Aorta (tissue), 5 donors: ENCODE measurements at regions of chrX and their contacts with region 1.

Region 1: GRCh38 chrX:115560978-115561604 is at the start of gene PLS3:
- DNase-seq: peak; percentile 91 to 94
- ATAC-seq: peak; percentile 91
- H3K4me3 ChIP-seq: peak within 1 kb of the TSS; percentile 48 to 49
- H3K27ac ChIP-seq: peak within 1 kb of the TSS; percentile 64 to 86
- H3K4me1 ChIP-seq: no peaks in the 10 kb centered on the region
- H3K27me3 ChIP-seq: no peaks in the 10 kb centered on the region
- total RNA-seq, gene PLS3: 481 to 708 TPM

Region 2: GRCh38 chrX:115357326-115358120 is 203.6 kb before region 1 on chrX:
- intact Hi-C with region 1: loop called in 1 of 2 experiments (anchors 5 kb)
- DNase-seq: no peak
- ATAC-seq: peak; percentile 52
- H3K4me3 ChIP-seq: no peak overlapping the region
- H3K27ac ChIP-seq: peak overlapping the region; percentile 74 to 87
- H3K4me1 ChIP-seq: peaks cover 4 to 5% of the 10 kb centered on the region in 2 donors
- H3K27me3 ChIP-seq: no peaks in the 10 kb centered on the region

Region 3: GRCh38 chrX:115459883-115460880 is 100.9 kb before region 1 on chrX:
- intact Hi-C with region 1: loop called in 1 of 2 experiments (anchors 2 kb)
- DNase-seq: no peak
- ATAC-seq: peak; percentile 52
- H3K4me3 ChIP-seq: no peak overlapping the region
- H3K27ac ChIP-seq: peak overlapping the region; percentile 40 to 43
- H3K4me1 ChIP-seq: no peaks in the 10 kb centered on the region
- H3K27me3 ChIP-seq: no peaks in the 10 kb centered on the region